Activated CD4-positive, alpha-beta T cell treated with anti-CD3 and anti-CD28 coated beads, Interleukin-2, amount 10 ng/mL, durations not matched to agents 7 days and 5 days (primary cell): ENCODE measurements at regions of chr7 and their contacts with region 1.

Region 1: DNA sequence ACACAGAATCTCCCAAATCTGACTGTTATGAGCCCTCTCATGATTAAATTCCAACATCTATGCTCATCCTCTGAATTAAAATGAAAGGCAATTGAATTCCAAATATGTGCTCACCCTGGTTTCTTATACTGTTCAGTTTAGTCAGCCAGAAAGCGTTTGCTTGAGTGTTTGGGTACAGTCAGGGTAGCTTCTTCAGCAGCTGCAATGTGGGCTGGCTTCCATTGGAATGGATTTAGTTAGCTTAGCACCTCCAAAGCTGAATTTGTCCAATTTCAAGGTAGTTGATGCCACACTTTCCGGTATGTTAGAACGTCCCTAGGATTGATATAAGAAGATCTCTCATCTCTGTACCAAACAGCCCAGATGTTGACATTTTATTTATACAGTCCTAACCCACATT is 9.3 kb downstream of the KLHL7 start:
- DNase-seq: no peak
- H3K4me3 Mint-ChIP-seq: no peak overlapping the region
- H3K27ac Mint-ChIP-seq: no peak overlapping the region
- H3K4me1 Mint-ChIP-seq: no peaks in the 10 kb centered on the region
- H3K27me3 Mint-ChIP-seq: no peaks in the 10 kb centered on the region

Region 2: DNA sequence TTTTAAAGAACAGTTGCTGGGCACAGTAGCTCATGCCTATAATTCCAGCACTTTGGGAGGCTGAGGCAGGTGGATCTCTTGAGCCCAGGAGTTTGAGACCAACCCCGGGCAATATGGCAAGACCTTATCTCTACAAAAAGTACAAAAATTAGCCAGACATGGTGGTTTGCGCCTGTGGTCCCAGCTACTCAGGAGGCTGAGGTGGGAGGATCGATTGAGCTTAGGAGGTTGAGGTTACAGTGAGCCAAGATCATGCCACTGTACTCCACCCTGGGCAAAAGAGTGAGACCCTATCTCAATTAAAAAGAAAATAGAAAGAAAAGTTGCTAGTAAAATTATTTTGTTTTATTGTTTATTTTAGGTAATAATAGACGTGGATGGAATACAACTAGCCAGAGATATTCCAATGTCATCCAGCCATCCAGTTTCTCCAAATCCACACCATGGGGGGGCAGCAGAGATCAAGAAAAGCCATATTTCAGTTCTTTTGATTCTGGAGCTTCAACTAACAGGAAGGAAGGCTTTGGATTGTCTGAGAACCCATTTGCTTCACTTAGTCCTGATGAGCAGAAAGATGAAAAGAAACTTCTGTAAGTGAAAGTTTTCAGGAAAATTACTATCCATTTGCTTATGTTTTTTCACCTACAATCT is 69.9 kb after region 1 on chr7:
- CTCF ChIA-PET with region 1: no interaction called
- POLR2A ChIA-PET with region 1: interaction called, 11 read pairs
- DNase-seq: no peak
- H3K4me3 Mint-ChIP-seq: no peak overlapping the region
- H3K27ac Mint-ChIP-seq: peak overlapping the region; percentile 9
- H3K4me1 Mint-ChIP-seq: peaks cover 42% of the 10 kb centered on the region
- H3K27me3 Mint-ChIP-seq: peaks cover 2% of the 10 kb centered on the region